ENCODE measurements at regions of chr22 and their contacts with region 1.

Region 1: DNA sequence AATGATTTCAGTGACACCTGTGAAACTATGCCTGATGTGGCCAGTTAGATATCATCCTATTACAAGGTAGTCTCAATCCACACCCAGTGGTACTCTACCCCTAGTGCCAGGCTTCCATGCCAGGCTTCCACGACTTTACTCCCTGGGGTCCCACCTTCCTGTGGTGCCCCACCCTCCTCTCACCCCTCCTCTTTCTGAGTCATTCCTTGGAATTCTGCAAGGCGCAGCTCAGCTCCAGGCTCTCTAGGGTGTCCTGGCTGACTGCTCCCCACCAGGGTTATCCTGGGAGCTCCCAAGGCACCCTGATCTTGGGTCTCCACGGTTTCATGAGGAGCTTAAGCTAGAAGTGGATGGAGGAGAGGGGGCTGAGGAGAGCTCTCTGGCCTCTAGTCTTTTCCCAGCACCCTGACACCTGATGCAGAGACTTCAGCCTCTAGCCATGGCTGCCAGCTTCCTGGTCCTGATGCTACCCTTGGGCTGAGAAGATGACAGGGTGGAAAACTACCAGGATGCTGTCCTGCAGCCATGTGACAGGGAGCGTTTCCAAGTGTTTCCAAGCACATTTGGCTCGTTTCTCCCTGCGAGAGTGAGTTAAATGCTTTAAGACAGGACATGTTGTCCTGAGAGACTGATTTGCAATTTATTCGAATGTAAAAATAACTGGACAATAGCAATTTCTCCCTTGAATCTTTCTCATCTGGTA is 1461.2 kb downstream of the TBC1D22A start:
- DNase-seq: no peak
- ATAC-seq: no peak
- H3K4me3 ChIP-seq: no peak overlapping the region
- H3K4me3 Mint-ChIP-seq: no peak overlapping the region
- H3K27ac ChIP-seq: no peak overlapping the region
- H3K27ac Mint-ChIP-seq: no peak overlapping the region
- H3K4me1 ChIP-seq: no peaks in the 10 kb centered on the region
- H3K4me1 Mint-ChIP-seq: no peaks in the 10 kb centered on the region
- H3K27me3 ChIP-seq: peaks cover 0 to 26% of the 10 kb centered on the region in 2 experiments
- H3K27me3 Mint-ChIP-seq: peaks cover 6 to 15% of the 10 kb centered on the region in 2 donors

Region 2: GRCh38 chr22:48464246-48464645 is 240.6 kb after region 1 on chr22:
- CTCF ChIA-PET with region 1: interaction called in 1 of 2 experiments, 15 read pairs
- POLR2A ChIA-PET with region 1: no interaction called
- DNase-seq: no peak
- ATAC-seq: no peak
- H3K4me3 ChIP-seq: no peak overlapping the region
- H3K4me3 Mint-ChIP-seq: no peak overlapping the region
- H3K27ac ChIP-seq: no peak overlapping the region
- H3K27ac Mint-ChIP-seq: no peak overlapping the region
- H3K4me1 ChIP-seq: no peaks in the 10 kb centered on the region
- H3K4me1 Mint-ChIP-seq: no peaks in the 10 kb centered on the region
- H3K27me3 ChIP-seq: peaks cover 0 to 16% of the 10 kb centered on the region in 2 experiments
- H3K27me3 Mint-ChIP-seq: peaks cover 4 to 8% of the 10 kb centered on the region in 2 donors

Measured in T-cell (primary cell).